ENCODE measurements at regions of chrX and their contacts with region 1.

Region 1: GRCh38 chrX:153763989-153764755 is at the start of gene PLXNB3:
- DNase-seq: peak; percentile 86
- ATAC-seq: peak; percentile 87
- H3K4me3 Mint-ChIP-seq: no peak within 1 kb of the TSS
- H3K27ac Mint-ChIP-seq: no peak within 1 kb of the TSS
- H3K4me1 Mint-ChIP-seq: peaks cover 9% of the 10 kb centered on the region
- H3K27me3 Mint-ChIP-seq: no peaks in the 10 kb centered on the region
- total RNA-seq, gene PLXNB3: 1.6 to 2.4 TPM

Region 2: DNA sequence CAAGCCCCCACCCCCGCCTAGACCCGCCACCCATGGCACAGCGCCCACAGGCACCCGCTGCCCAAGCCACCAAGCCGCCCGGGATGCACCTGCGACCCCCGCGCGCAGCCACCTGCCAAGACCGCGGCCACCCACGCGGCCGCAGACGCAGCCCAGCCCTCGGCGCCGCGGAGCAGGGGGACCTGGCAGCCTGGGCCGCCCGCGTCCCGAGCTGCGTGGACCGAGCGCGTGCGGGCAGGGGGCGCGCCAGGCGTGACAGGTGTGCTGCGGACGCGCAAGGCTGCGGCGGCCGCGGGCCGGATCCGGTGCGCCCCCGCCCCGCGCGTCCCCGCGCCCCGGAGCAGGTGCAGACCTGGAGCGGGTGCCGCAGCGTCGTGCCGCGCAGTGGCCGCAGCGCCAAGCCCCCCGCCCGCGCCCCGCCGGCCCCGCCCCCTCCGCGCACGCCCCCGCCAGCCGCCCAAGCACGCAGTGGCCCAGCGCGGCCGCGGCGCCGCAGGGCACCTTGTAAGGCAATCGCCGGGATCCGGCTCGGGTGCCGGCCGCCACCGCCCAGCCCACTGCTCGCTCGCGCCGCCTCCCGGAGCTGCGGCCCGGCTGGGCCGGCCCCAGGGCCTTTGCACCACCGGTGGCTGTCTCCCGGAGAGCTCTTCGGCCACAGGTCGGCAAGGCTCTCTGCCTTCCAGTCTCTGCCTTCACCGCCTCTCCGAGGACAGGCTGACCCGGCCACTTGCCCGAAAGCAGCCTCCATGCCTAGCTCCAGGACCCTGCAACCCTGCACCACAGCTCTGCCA is 90.5 kb before region 1 on chrX and contains the start of gene PNCK:
- CTCF ChIA-PET with region 1: no interaction called
- POLR2A ChIA-PET with region 1: no interaction called
- intact Hi-C with region 1: no loop called
- DNase-seq: no peak
- ATAC-seq: no peak
- H3K4me3 Mint-ChIP-seq: no peak within 1 kb of the TSS
- H3K27ac Mint-ChIP-seq: no peak within 1 kb of the TSS
- H3K4me1 Mint-ChIP-seq: peaks cover 2% of the 10 kb centered on the region
- H3K27me3 Mint-ChIP-seq: peaks cover 11% of the 10 kb centered on the region
- total RNA-seq, gene PNCK: 0.30 to 0.71 TPM

Region 3: GRCh38 chrX:153794018-153794896 is 30.1 kb after region 1 on chrX and contains the starts of genes IDH3G and SSR4:
- CTCF ChIA-PET with region 1: no interaction called
- POLR2A ChIA-PET with region 1: no interaction called
- intact Hi-C with region 1: loop called in 1 of 2 experiments (anchors 1 kb)
- DNase-seq: peak; percentile 96
- ATAC-seq: peak; percentile 97
- H3K4me3 Mint-ChIP-seq: peak within 1 kb of the TSS; percentile 93
- H3K27ac Mint-ChIP-seq: peak within 1 kb of the TSS; percentile 93
- H3K4me1 Mint-ChIP-seq: peaks cover 21% of the 10 kb centered on the region
- H3K27me3 Mint-ChIP-seq: no peaks in the 10 kb centered on the region
- total RNA-seq, gene IDH3G: 48.8 to 62.4 TPM
- total RNA-seq, gene SSR4: 124 to 146 TPM

Region 4: DNA sequence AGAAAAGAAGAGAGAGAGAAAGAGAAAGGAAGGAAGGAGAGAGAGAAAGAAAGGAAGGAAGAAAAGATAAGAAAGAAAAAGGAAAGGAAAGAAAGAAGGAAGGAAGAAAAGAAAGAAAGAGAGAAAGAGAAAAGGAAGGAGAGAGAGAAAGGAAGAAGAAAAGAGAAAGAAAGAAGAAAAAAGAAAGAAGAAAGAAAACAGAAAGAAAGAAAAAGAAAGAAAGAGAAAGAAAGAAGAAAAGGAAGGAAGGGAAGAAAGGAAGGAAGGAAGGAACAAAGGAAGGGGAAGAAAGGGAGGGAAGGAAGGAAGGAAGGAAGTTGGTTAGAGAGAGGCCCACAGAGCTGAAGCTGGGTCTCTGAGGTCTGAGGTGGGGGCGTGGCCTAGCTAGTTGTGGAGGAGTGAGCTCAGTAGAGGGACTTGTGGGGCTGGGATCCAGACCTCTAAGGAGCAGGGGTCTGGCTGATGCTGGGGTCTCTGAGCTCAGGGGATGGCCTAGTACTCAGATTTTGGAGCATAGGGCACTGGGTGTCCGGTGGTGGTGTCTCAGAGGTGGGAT is 93.3 kb after region 1 on chrX:
- CTCF ChIA-PET with region 1: no interaction called
- POLR2A ChIA-PET with region 1: no interaction called
- intact Hi-C with region 1: no loop called
- DNase-seq: no peak
- ATAC-seq: no peak
- H3K4me3 Mint-ChIP-seq: no peak overlapping the region
- H3K27ac Mint-ChIP-seq: no peak overlapping the region
- H3K4me1 Mint-ChIP-seq: peaks cover 6% of the 10 kb centered on the region
- H3K27me3 Mint-ChIP-seq: no peaks in the 10 kb centered on the region

Region 5: GRCh38 chrX:153885968-153886903 is 122.1 kb after region 1 on chrX and contains the start of gene L1CAM:
- CTCF ChIA-PET with region 1: interaction called, 4 read pairs
- POLR2A ChIA-PET with region 1: no interaction called
- intact Hi-C with region 1: loop called (anchors 1 to 5 kb)
- DNase-seq: peak; percentile 65
- ATAC-seq: peak; percentile 66
- H3K4me3 Mint-ChIP-seq: peak within 1 kb of the TSS; percentile 41
- H3K27ac Mint-ChIP-seq: no peak within 1 kb of the TSS
- H3K4me1 Mint-ChIP-seq: peaks cover 4% of the 10 kb centered on the region
- H3K27me3 Mint-ChIP-seq: peaks cover 12% of the 10 kb centered on the region
- total RNA-seq, gene L1CAM: 0.47 to 0.57 TPM

Region 6: GRCh38 chrX:153947009-153947769 is 183.0 kb after region 1 on chrX:
- CTCF ChIA-PET with region 1: interaction called, 8 read pairs
- POLR2A ChIA-PET with region 1: no interaction called
- intact Hi-C with region 1: loop called (anchors 1 to 5 kb)
- DNase-seq: peak; percentile 89
- ATAC-seq: peak; percentile 87
- H3K4me3 Mint-ChIP-seq: no peak overlapping the region
- H3K27ac Mint-ChIP-seq: peak overlapping the region; percentile 87
- H3K4me1 Mint-ChIP-seq: peaks cover 14% of the 10 kb centered on the region
- H3K27me3 Mint-ChIP-seq: no peaks in the 10 kb centered on the region

Region 7: GRCh38 chrX:154000051-154000450 is 235.9 kb after region 1 on chrX:
- CTCF ChIA-PET with region 1: no interaction called
- POLR2A ChIA-PET with region 1: no interaction called
- intact Hi-C with region 1: no loop called
- DNase-seq: no peak
- ATAC-seq: no peak
- H3K4me3 Mint-ChIP-seq: no peak overlapping the region
- H3K27ac Mint-ChIP-seq: no peak overlapping the region
- H3K4me1 Mint-ChIP-seq: peaks cover 13% of the 10 kb centered on the region
- H3K27me3 Mint-ChIP-seq: no peaks in the 10 kb centered on the region

Region 8: GRCh38 chrX:154428176-154429010 is 664.2 kb after region 1 on chrX and contains the start of gene ATP6AP1:
- CTCF ChIA-PET with region 1: no interaction called
- POLR2A ChIA-PET with region 1: no interaction called
- intact Hi-C with region 1: no loop called
- DNase-seq: peak; percentile 94
- ATAC-seq: peak; percentile 99
- H3K4me3 Mint-ChIP-seq: peak within 1 kb of the TSS; percentile 77
- H3K27ac Mint-ChIP-seq: peak within 1 kb of the TSS; percentile 65
- H3K4me1 Mint-ChIP-seq: peaks cover 26% of the 10 kb centered on the region
- H3K27me3 Mint-ChIP-seq: no peaks in the 10 kb centered on the region
- total RNA-seq, gene ATP6AP1: 25.6 to 28.6 TPM

Region 9: DNA sequence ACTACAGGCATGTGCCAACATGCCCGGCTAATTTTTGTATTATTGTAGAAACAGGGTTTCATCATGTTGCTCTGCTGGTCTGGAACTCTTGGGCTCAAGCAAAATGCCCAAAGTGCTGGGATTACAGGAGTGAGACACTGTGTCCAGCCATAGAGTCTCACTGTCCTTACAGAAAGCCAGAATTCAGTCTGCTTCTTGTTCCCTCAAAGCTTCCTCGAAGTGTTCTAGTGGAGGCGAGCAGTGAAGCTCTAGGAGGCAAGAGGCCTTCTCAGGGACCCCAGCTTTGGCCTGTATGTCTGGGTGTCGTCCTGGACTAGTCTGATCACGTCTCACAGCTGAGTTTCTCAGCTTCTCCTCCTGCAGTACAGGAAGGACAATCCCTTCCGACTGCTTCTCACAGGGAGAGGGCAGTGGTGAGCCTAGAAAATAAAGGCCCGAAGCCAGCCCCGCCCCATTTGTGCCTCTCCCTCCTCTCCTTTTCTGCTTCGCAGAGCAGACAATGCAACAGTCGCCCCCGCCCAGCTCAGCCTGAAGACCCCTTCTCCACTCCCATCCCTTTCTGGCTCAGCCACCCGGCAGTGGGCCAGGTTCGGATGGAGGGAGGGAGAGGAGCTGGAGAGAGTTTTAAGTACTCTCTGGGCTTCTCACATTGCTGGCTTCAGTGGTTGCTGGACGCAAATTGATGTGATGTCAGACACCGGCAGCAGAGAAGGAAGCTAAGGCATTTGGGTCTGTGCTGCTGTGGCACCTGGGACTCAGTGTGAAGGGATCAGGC is 762.9 kb after region 1 on chrX:
- CTCF ChIA-PET with region 1: no interaction called
- POLR2A ChIA-PET with region 1: no interaction called
- intact Hi-C with region 1: loop called in 1 of 2 experiments (anchors 5 kb)
- DNase-seq: peak; percentile 81
- ATAC-seq: peak; percentile 98
- H3K4me3 Mint-ChIP-seq: no peak overlapping the region
- H3K27ac Mint-ChIP-seq: no peak overlapping the region
- H3K4me1 Mint-ChIP-seq: peaks cover 18% of the 10 kb centered on the region
- H3K27me3 Mint-ChIP-seq: no peaks in the 10 kb centered on the region